GM12878 (cell line): ENCODE measurements at regions of chr12 and their contacts with region 1.

Region 1: GRCh38 chr12:93317227-93317626 is 60.5 kb upstream of the NUDT4 start:
- DNase-seq: no peak
- ATAC-seq: no peak
- H3K4me3 ChIP-seq: no peak overlapping the region
- H3K27ac ChIP-seq: no peak overlapping the region
- H3K4me1 ChIP-seq: no peaks in the 10 kb centered on the region
- H3K27me3 ChIP-seq: no peaks in the 10 kb centered on the region
- CTCF ChIP-seq: no peak
- EP300 ChIP-seq: no peak
- POLR2A ChIP-seq: no peak
- RAD21 ChIP-seq: no peak

Region 2: GRCh38 chr12:92973601-92974000 is 343.6 kb before region 1 on chr12:
- CTCF ChIA-PET with region 1: no interaction called
- POLR2A ChIA-PET with region 1: no interaction called
- RAD21 ChIA-PET with region 1: no interaction called
- SMC1A ChIA-PET with region 1: no interaction called
- in situ Hi-C with region 1: no loop called
- intact Hi-C with region 1: no loop called
- DNase-seq: peak; percentile 95
- ATAC-seq: peak; percentile 62
- H3K4me3 ChIP-seq: no peak overlapping the region
- H3K27ac ChIP-seq: peak overlapping the region; percentile 91
- H3K4me1 ChIP-seq: peaks cover 55% of the 10 kb centered on the region
- H3K27me3 ChIP-seq: no peaks in the 10 kb centered on the region
- CTCF ChIP-seq: no peak
- EP300 ChIP-seq: peak; percentile 20 to 21; a peak in 1 of 4 replicates
- POLR2A ChIP-seq: no peak
- RAD21 ChIP-seq: no peak

Region 3: GRCh38 chr12:93297032-93297431 is 20.2 kb before region 1 on chr12:
- CTCF ChIA-PET with region 1: no interaction called
- POLR2A ChIA-PET with region 1: interaction called, 3 read pairs
- RAD21 ChIA-PET with region 1: no interaction called
- SMC1A ChIA-PET with region 1: interaction called, 10 read pairs
- in situ Hi-C with region 1: no loop called
- intact Hi-C with region 1: no loop called
- DNase-seq: peak; percentile 75
- ATAC-seq: peak; percentile 95
- H3K4me3 ChIP-seq: peak overlapping the region; percentile 25
- H3K27ac ChIP-seq: peak overlapping the region; percentile 73
- H3K4me1 ChIP-seq: peaks cover 17% of the 10 kb centered on the region
- H3K27me3 ChIP-seq: no peaks in the 10 kb centered on the region
- CTCF ChIP-seq: no peak
- EP300 ChIP-seq: no peak
- POLR2A ChIP-seq: no peak
- RAD21 ChIP-seq: 0 out of 2 replicates have a peak, but pooled peaks have one; percentile 13

Region 4: GRCh38 chr12:93427779-93428563 is 110.7 kb after region 1 on chr12:
- CTCF ChIA-PET with region 1: no interaction called
- POLR2A ChIA-PET with region 1: no interaction called
- RAD21 ChIA-PET with region 1: no interaction called
- SMC1A ChIA-PET with region 1: no interaction called
- in situ Hi-C with region 1: no loop called
- intact Hi-C with region 1: no loop called
- DNase-seq: no peak
- ATAC-seq: no peak
- H3K4me3 ChIP-seq: no peak overlapping the region
- H3K27ac ChIP-seq: no peak overlapping the region
- H3K4me1 ChIP-seq: peaks cover 72% of the 10 kb centered on the region
- H3K27me3 ChIP-seq: no peaks in the 10 kb centered on the region
- CTCF ChIP-seq: no peak
- EP300 ChIP-seq: no peak
- POLR2A ChIP-seq: no peak
- RAD21 ChIP-seq: no peak